ENCODE measurements at regions of chr3 and their contacts with region 1.

Region 1: DNA sequence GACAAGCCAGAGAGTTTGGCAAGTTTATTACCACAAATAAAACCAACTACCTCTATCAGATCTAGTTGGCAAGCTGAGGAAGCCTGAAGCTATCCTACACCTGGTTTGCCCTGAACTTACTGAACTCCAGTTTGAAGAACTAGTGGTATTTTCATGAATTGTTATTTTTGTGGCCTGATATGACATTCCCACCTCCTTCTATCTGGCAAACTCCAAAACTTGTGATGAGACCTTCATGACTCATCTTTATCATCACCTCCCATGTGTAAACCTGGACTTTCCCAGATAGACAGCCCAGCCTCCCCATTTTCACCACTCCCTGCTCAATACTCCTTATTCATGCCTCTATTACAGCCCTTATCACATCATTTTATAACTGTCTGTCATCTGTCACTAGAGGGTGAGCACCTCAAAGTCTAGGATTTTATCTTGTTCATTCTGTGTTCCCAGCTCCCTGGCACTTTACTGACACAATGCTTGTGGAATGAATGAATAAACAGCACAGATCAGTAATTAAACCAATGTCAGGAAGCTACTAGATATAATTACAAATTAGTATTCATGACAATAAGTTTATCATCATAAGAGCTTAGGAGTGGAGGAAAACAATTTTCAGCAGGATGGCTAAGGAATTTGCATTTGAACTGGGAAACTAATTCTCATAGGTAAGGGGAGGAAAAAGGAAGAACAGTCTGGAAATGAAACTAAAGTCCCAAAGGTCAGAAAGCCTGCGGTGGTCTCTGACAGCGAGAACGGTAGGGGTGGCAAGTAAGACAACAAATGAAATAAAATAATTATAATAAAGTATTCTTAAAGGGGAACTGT is 13.2 kb upstream of the TRANK1 start:
- DNase-seq: no peak
- ATAC-seq: peak; percentile 24 to 63
- H3K4me3 ChIP-seq: no peak overlapping the region
- H3K27ac ChIP-seq: no peak overlapping the region
- H3K4me1 ChIP-seq: no peaks in the 10 kb centered on the region
- H3K27me3 ChIP-seq: no peaks in the 10 kb centered on the region

Region 2: DNA sequence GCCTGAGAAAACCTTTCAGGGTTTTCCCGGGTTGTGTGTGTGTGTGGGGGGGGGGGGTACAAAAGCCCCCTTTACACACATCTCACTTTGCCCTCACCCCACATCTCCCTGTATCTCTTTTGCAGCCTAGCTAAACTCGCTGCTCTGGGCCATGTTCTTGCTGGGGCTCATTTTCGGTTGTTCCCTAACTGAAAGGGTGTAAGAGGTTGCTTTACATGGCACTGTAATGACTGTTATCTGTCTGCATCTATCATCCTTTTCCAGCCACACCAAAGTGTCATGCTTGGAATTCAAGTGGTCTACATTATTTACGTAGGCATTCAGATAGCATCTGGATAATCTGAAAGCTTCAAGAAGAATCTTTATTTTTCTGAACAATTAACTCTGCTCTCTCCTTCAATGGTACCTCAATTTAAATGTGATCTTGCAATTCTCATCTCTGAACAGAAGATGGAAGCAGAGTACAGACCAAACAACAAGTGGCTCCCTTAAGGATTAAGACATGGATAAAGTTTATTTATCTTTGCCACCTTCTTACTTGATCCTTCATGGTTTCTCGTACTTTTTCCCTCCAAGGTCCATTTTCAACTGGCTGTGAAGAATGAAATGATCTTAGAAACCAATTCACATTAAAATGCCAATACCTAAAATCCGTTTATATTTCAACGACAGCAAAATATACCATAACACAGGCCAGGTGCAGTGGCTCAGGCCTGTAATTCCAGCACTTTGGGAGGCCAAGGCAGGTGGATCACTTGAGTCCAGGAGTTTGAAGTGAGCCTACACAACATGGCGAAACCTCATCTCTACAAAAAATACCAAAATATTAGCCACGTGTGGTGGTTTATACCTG is 228.6 kb before region 1 on chr3:
- intact Hi-C with region 1: loop called in 2 of 4 experiments (anchors 5 to 10 kb)
- DNase-seq: no peak
- ATAC-seq: peak; percentile 61 to 65
- H3K4me3 ChIP-seq: no peak overlapping the region
- H3K27ac ChIP-seq: no peak overlapping the region
- H3K4me1 ChIP-seq: peaks cover 5% of the 10 kb centered on the region
- H3K27me3 ChIP-seq: no peaks in the 10 kb centered on the region

Region 3: GRCh38 chr3:36738702-36739101 is 219.4 kb before region 1 on chr3:
- intact Hi-C with region 1: loop called in 3 of 4 experiments (anchors 5 to 10 kb)
- DNase-seq: peak; percentile 43 to 75 (median 68)
- ATAC-seq: no peak
- H3K4me3 ChIP-seq: no peak overlapping the region
- H3K27ac ChIP-seq: no peak overlapping the region
- H3K4me1 ChIP-seq: no peaks in the 10 kb centered on the region
- H3K27me3 ChIP-seq: no peaks in the 10 kb centered on the region

Region 4: DNA sequence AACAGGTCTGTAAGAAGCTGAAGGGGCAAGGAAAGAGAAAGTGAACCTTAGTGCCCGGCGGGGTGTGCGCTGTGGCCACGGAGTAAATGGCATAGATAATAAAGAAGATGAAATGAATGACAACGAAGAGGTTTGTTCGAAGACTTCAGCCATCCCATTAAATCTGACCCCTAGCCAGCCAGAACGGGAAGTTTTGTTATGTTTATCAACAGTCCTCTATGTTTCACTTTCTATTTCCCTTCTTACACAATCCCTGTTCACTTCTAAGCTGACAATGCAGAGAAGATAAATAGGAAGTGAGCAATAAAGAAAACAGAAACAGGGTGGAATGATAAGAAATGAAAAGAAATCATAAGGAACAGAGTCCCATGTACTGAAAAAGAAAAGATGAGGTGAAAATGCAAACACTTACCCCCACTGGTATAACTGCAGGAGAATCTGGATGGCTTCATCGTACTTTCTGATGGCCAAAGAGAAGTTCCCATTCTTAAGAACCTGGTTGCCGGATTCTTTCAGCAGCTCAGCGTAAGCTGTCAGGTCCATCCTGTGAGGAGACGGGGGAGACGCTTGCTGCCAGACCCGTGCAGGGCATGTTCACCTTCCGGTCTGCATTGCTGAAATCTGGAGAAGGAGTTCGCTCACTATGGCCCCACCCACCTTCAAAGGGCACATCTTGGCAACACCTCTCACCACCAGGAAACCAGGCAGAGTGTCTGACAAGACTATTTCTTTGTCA is 50.0 kb before region 1 on chr3:
- intact Hi-C with region 1: loop called (anchors 5 to 10 kb)
- DNase-seq: peak; percentile 44 to 66 (median 66)
- ATAC-seq: peak; percentile 82 to 84
- H3K4me3 ChIP-seq: peak overlapping the region; percentile 84
- H3K27ac ChIP-seq: peak overlapping the region; percentile 89
- H3K4me1 ChIP-seq: peaks cover 2% of the 10 kb centered on the region
- H3K27me3 ChIP-seq: no peaks in the 10 kb centered on the region

Region 5: DNA sequence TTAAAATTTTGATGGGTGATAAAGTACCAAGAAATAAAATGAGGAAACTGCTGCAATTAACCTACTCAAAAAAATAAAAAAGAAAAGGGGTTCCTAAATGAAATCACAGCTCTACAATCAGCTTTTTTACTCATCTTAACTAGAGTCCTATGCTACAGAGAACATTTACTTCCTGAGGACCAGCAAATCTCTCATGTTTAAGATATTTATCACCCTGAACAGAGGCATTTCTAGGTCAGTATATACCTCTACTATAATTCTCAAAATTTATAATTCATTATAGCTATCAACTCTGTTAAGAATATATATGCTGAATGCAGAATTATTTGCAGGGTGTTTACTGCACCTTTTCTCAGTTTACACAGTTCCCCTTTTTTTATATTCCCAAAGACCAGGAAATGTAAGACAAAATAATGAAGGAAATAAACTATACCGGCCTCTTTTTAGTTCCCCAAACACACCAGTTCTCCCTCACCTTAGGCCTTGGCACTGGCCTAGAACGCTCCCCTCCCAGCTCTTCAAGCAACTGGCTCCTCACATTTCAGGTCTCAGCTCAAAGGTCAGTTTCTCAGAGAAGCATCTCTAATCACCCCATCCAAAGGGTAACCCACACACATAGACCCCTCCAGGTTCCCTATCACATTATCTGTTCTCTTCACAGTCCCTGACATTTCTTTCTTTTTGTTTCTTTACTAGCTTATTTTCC is 145.2 kb after region 1 on chr3:
- intact Hi-C with region 1: no loop called
- DNase-seq: no peak
- ATAC-seq: no peak
- H3K4me3 ChIP-seq: no peak overlapping the region
- H3K27ac ChIP-seq: no peak overlapping the region
- H3K4me1 ChIP-seq: peaks cover 2% of the 10 kb centered on the region
- H3K27me3 ChIP-seq: no peaks in the 10 kb centered on the region

Region 6: GRCh38 chr3:37279236-37279635 is 321.2 kb after region 1 on chr3:
- intact Hi-C with region 1: no loop called
- DNase-seq: no peak
- ATAC-seq: peak; percentile 17 to 36
- H3K4me3 ChIP-seq: no peak overlapping the region
- H3K27ac ChIP-seq: no peak overlapping the region
- H3K4me1 ChIP-seq: no peaks in the 10 kb centered on the region
- H3K27me3 ChIP-seq: no peaks in the 10 kb centered on the region

Region 7: DNA sequence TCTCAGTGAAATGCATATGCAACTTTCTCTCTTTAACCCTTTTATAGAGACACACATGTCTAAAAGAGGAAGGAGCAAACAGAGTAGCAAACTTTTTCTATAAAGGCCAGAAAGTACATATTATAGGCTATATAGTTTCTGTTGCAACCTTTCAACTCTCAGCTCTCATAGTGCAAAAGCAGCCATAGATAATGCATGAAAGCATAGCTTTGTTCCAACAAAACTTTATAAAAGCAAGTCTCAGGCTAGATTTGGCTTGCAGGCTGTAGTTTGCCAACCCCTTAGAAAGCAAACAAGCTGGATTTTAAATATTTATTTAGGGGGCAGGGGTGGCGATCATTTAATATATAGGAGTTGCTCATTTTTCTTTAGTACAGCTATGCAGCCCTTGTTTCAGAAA is 409.4 kb after region 1 on chr3:
- intact Hi-C with region 1: no loop called
- DNase-seq: no peak
- ATAC-seq: no peak
- H3K4me3 ChIP-seq: no peak overlapping the region
- H3K27ac ChIP-seq: no peak overlapping the region
- H3K4me1 ChIP-seq: no peaks in the 10 kb centered on the region
- H3K27me3 ChIP-seq: no peaks in the 10 kb centered on the region

Measured in right cardiac atrium (tissue), 5 donors.